Posterior vena cava (tissue), 2 donors: ENCODE measurements at regions of chr1 and their contacts with region 1.

Region 1: GRCh38 chr1:110298991-110299390 is 40.2 kb upstream of the RBM15 start:
- DNase-seq: no peak

Region 2: GRCh38 chr1:110069404-110070281 is 229.3 kb before region 1 on chr1:
- intact Hi-C with region 1: loop called in 1 of 2 experiments (anchors 5 kb)
- DNase-seq: no peak

Region 3: DNA sequence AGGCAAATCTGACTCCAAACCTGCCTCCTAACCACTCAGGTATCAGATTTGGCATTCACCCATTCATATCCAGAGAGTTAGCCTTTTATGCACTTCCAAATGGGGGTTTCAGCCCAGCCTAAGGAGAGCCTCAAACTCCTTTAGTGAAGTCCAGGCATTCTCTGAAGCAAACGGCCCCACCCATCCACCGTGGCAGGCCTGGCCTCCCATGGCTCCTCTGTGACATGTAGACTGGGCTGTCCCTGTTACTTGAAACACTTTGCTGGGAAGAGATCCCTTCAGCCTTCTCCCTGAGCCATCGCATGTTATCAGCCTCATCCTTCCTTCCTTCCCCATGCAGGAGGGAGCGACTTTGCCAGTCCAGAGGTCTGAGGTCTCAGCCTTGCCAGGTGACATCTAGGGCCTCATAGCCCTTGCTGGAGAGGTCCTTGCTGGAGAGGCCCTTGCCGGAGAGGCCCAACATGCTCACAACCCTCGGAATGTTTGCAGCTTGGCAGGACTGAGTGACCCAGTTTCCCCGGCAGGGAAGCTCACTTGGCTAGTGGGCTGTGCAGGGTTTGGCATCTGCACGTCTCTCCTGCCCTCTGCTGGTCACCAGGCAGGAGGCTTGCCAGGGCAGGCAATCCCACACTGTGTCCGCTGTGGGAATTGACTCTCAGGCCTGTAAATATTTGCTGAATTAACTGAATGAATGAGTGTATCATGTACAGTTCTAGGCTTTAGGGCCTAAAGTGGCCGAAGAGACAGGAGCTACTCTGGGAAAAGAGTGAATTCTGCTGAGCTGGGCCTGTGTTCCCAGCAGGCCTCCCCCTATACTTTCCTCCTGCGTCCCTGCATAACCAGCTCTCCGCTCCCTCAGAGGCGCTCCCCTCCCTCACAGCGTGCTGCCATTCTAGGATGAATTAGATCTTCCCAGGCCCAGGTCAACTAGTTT is 13.5 kb after region 1 on chr1:
- intact Hi-C with region 1: no loop called
- DNase-seq: peak; percentile 94